Naive thymus-derived CD4-positive, alpha-beta T cell (primary cell): ENCODE measurements at regions of chr2 and their contacts with region 1.

Region 1: GRCh38 chr2:231662028-231662810 is 46.1 kb upstream of the PTMA start:
- DNase-seq: peak; percentile 93 to 100 (median 99)
- ATAC-seq: peak; percentile 93
- H3K4me3 ChIP-seq: peak overlapping the region; percentile 73
- H3K4me3 Mint-ChIP-seq: peak overlapping the region; percentile 70 to 87 (median 84)
- H3K27ac ChIP-seq: peak overlapping the region; percentile 88
- H3K27ac Mint-ChIP-seq: peak overlapping the region; percentile 89 to 99 (median 96)
- H3K4me1 ChIP-seq: peaks cover 8 to 14% of the 10 kb centered on the region in 2 donors
- H3K4me1 Mint-ChIP-seq: peaks cover 8 to 34% (median 23%) of the 10 kb centered on the region in 7 donors
- H3K27me3 ChIP-seq: no peaks in the 10 kb centered on the region
- H3K27me3 Mint-ChIP-seq: no peaks in the 10 kb centered on the region

Region 2: DNA sequence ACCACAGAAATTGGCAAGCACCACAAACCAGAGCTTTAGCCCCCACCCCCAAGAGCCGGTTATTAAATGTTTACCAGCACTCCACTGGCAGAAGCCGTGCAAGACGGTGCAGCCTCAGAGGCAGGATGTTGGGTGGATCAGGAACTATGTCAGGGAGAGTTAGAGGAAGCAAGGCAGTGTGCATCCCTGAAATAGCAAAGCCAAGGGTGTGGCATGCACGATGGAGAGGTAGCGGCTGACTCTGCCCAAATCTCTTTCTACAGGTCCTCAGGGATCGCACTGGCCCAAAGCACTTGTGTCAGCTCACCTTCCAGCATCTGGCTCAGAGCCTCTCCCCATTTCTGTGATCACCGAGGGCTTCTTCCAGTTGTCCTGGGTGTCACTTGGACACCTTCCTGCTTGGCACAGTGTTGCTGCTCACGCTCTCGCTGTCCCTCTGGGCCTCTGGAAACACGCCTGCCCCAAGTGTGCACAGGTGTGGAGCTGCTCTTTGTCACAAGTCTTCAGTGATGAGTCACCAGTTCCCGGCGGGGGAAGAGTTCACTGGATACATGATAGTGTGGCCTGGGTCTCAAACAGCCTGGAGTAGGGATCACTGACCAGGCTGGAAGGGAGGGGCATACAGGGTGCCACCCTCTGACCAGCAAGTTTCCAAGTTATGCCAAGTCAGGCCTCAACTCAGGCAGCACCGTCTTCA is 284.0 kb before region 1 on chr2:
- CTCF ChIA-PET with region 1: no interaction called
- POLR2A ChIA-PET with region 1: no interaction called
- intact Hi-C with region 1: no loop called
- DNase-seq: no peak
- ATAC-seq: peak; percentile 57
- H3K4me3 ChIP-seq: no peak overlapping the region
- H3K4me3 Mint-ChIP-seq: no peak overlapping the region
- H3K27ac ChIP-seq: no peak overlapping the region
- H3K27ac Mint-ChIP-seq: no peak overlapping the region
- H3K4me1 ChIP-seq: no peaks in the 10 kb centered on the region
- H3K4me1 Mint-ChIP-seq: no peaks in the 10 kb centered on the region
- H3K27me3 ChIP-seq: no peaks in the 10 kb centered on the region
- H3K27me3 Mint-ChIP-seq: peaks cover 0 to 13% (median 0%) of the 10 kb centered on the region in 5 donors

Region 3: DNA sequence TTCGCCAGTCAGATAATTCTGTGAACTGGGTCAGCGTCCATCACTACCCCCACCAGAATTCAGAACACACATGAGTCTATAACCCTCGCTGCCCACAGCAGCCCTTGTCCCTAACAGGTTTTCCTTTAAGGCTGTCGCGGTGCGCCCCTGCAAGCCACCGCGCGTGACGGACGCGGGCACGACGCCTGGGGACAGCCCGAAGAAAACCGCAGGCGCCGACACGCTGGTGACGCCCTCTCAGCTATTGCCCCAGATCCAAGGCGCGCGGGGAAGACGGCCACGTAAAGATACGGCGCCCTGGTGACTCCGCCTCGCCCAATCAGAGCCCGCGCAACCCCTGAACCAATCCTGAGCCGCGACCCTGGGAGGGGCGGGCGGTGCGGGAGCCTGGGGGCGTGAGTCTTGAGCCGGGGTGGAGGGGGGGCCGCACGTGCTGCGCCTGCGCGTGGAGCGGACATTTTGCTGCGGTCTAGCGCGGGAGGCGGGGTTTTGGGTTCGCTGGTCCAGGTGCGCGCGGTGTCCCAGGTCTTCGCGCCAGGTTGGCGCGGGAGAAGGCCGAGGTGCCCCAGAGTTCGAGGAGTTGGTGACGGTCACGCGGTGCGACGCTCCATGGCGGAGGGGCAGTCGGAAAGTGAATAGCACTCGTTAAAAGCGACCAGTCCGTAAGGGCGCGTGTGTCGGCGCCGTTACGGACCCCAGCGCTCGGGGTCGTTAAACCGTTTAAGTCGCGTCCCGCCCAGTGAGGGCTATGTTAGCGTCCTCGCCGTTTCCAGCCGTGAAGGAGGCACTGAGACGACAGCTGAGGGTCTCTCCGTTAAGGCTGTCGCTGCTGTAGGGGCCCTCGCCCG is 147.9 kb before region 1 on chr2:
- CTCF ChIA-PET with region 1: no interaction called
- POLR2A ChIA-PET with region 1: interaction called, 3 read pairs
- intact Hi-C with region 1: loop called (anchors 1 to 2 kb)
- DNase-seq: peak; percentile 92 to 99 (median 98)
- ATAC-seq: peak; percentile 99
- H3K4me3 ChIP-seq: peak overlapping the region; percentile 84
- H3K4me3 Mint-ChIP-seq: peak overlapping the region; percentile 80 to 95 (median 92)
- H3K27ac ChIP-seq: peak overlapping the region; percentile 93
- H3K27ac Mint-ChIP-seq: peak overlapping the region; percentile 93 to 99 (median 98)
- H3K4me1 ChIP-seq: peaks cover 5 to 11% of the 10 kb centered on the region in 2 donors
- H3K4me1 Mint-ChIP-seq: peaks cover 0 to 21% (median 14%) of the 10 kb centered on the region in 7 donors
- H3K27me3 ChIP-seq: no peaks in the 10 kb centered on the region
- H3K27me3 Mint-ChIP-seq: peaks cover 0 to 4% (median 0%) of the 10 kb centered on the region in 5 donors

Region 4: GRCh38 chr2:231612179-231613053 is 49.8 kb before region 1 on chr2:
- CTCF ChIA-PET with region 1: interaction called, 3 read pairs
- POLR2A ChIA-PET with region 1: interaction called, 17 read pairs
- intact Hi-C with region 1: loop called (anchors 1 kb)
- DNase-seq: peak; percentile 70 to 95 (median 84)
- ATAC-seq: peak; percentile 88
- H3K4me3 ChIP-seq: peak overlapping the region; percentile 63
- H3K4me3 Mint-ChIP-seq: peak overlapping the region; percentile 65 to 96 (median 86)
- H3K27ac ChIP-seq: no peak overlapping the region
- H3K27ac Mint-ChIP-seq: peak overlapping the region in 7 of 9 donors; percentile 38 to 99 (median 69)
- H3K4me1 ChIP-seq: peaks cover 13 to 19% of the 10 kb centered on the region in 2 donors
- H3K4me1 Mint-ChIP-seq: peaks cover 7 to 51% (median 31%) of the 10 kb centered on the region in 7 donors
- H3K27me3 ChIP-seq: no peaks in the 10 kb centered on the region
- H3K27me3 Mint-ChIP-seq: no peaks in the 10 kb centered on the region

Region 5: DNA sequence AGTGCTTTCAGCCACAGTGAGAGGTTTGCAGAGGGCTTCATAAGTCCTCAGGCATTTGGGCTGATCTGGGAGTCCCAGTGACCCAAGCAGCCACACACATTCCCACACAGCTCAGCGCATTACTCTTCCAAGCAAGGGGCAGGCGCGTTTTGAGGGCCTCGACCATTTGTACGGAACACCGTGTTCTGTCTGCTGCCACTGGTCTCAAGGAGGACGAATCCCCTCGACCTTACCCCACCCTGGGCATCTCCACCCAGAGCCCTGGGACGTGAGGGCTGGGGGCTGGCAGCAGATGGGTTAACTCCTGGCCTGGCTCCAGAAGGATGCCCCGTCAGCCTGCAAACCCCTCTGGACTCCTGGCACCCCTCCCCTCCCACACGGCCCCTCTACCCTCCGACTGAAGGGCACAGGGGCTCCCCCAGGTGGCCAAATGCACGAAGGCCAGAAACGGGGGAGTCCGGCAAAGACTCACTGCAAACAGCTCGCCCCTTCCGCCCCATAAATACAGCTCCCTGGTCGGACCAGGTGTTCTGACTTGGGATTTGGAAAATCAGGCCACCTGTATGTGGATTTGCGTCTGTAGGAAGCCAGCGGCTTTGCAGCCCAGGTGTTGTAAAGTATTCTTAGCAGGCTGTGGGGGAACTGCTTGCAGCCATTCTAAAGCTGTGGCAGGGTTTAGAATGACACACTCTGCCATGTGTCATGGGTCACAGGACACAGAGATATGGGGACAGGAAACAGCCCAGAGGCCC is 12.5 kb after region 1 on chr2:
- CTCF ChIA-PET with region 1: interaction called, 5 read pairs
- POLR2A ChIA-PET with region 1: interaction called, 8 read pairs
- intact Hi-C with region 1: loop called (anchors 1 kb)
- DNase-seq: peak in 7 of 9 donors; percentile 30 to 70 (median 46)
- ATAC-seq: peak; percentile 74
- H3K4me3 ChIP-seq: no peak overlapping the region
- H3K4me3 Mint-ChIP-seq: no peak overlapping the region
- H3K27ac ChIP-seq: no peak overlapping the region
- H3K27ac Mint-ChIP-seq: peak overlapping the region in 1 of 9 donors; percentile 60
- H3K4me1 ChIP-seq: peaks cover 0 to 3% of the 10 kb centered on the region in 2 donors
- H3K4me1 Mint-ChIP-seq: peaks cover 5 to 43% (median 8%) of the 10 kb centered on the region in 7 donors
- H3K27me3 ChIP-seq: no peaks in the 10 kb centered on the region
- H3K27me3 Mint-ChIP-seq: peaks cover 0 to 4% (median 0%) of the 10 kb centered on the region in 5 donors

Region 6: GRCh38 chr2:231701456-231702373 is 39.5 kb after region 1 on chr2:
- CTCF ChIA-PET with region 1: interaction called, 8 read pairs
- POLR2A ChIA-PET with region 1: interaction called, 241 read pairs
- intact Hi-C with region 1: loop called in 1 of 2 experiments (anchors 1 kb)
- DNase-seq: no peak
- ATAC-seq: no peak
- H3K4me3 ChIP-seq: no peak overlapping the region
- H3K4me3 Mint-ChIP-seq: no peak overlapping the region
- H3K27ac ChIP-seq: no peak overlapping the region
- H3K27ac Mint-ChIP-seq: no peak overlapping the region
- H3K4me1 ChIP-seq: peaks cover 11 to 12% of the 10 kb centered on the region in 2 donors
- H3K4me1 Mint-ChIP-seq: peaks cover 0 to 21% (median 11%) of the 10 kb centered on the region in 7 donors
- H3K27me3 ChIP-seq: no peaks in the 10 kb centered on the region
- H3K27me3 Mint-ChIP-seq: no peaks in the 10 kb centered on the region

Region 7: DNA sequence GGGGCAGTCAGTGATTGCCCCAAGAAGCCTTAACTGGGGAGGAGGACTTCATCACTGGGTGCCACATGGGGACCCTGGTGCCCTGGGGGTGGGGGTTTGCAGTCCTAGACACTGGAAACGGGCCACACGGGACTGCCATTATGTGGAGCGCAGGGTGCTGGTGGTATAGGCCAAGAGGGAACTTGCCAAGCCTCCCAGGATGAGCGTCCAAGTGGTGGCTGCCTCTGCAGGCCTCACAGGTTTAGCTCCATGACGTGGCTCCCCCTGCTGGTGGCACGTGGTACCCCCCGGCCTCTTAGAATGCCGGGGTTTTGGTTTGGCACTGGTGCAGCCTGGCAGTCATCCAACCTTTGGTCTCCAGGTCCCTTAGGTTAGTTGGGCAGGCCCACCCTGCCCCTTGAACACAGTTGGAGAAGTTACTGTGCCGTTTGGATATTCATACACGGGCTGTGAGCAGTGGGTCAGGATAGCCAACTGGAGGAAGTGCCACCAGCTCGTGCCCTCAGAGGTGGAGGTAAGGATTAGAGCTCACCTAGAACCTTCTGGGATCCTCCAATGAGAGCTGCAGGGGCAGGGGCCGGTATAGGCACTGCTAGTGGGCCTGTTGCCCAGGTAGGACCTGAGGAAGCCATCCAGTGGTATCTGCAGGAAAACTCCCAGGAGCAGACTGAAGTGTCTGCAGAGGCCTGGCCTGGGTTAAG is 51.7 kb after region 1 on chr2:
- CTCF ChIA-PET with region 1: interaction called, 14 read pairs
- POLR2A ChIA-PET with region 1: interaction called, 241 read pairs
- intact Hi-C with region 1: no loop called
- DNase-seq: peak; percentile 83 to 96 (median 90)
- ATAC-seq: peak; percentile 67
- H3K4me3 ChIP-seq: no peak overlapping the region
- H3K4me3 Mint-ChIP-seq: peak overlapping the region; percentile 37 to 72 (median 58)
- H3K27ac ChIP-seq: peak overlapping the region; percentile 59
- H3K27ac Mint-ChIP-seq: peak overlapping the region; percentile 79 to 97 (median 94)
- H3K4me1 ChIP-seq: peaks cover 28 to 34% of the 10 kb centered on the region in 2 donors
- H3K4me1 Mint-ChIP-seq: peaks cover 30 to 45% (median 35%) of the 10 kb centered on the region in 7 donors
- H3K27me3 ChIP-seq: no peaks in the 10 kb centered on the region
- H3K27me3 Mint-ChIP-seq: peaks cover 0 to 2% (median 0%) of the 10 kb centered on the region in 5 donors